PC-9 (cell line): ENCODE measurements at regions of chr15 and their contacts with region 1.

Region 1: DNA sequence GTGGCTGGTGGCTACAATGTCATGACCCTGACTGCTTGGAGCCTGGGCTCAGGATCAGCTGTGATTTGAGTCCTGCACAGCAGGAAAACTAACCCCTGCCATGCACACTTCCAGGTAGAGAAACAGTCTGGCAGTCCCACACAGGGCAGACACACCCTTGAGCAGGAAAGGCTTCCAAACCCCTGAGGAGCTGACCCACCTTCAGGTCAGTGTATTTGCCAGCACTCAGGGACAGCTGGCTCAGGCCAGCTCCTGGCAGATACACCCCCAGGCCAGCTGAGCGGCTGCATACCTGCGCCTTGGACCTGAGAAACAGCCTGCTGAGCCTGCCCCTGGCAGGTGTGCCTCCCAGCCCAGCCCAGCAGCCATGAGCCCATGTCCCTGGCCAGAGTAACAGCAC is 22.2 kb upstream of the CDAN1 start:
- DNase-seq: peak in 1 of 2 experiments; percentile 5
- H3K4me3 ChIP-seq: no peak overlapping the region
- H3K27ac ChIP-seq: no peak overlapping the region
- H3K4me1 ChIP-seq: no peaks in the 10 kb centered on the region
- H3K27me3 ChIP-seq: no peaks in the 10 kb centered on the region
- CTCF ChIP-seq: no peak

Region 2: DNA sequence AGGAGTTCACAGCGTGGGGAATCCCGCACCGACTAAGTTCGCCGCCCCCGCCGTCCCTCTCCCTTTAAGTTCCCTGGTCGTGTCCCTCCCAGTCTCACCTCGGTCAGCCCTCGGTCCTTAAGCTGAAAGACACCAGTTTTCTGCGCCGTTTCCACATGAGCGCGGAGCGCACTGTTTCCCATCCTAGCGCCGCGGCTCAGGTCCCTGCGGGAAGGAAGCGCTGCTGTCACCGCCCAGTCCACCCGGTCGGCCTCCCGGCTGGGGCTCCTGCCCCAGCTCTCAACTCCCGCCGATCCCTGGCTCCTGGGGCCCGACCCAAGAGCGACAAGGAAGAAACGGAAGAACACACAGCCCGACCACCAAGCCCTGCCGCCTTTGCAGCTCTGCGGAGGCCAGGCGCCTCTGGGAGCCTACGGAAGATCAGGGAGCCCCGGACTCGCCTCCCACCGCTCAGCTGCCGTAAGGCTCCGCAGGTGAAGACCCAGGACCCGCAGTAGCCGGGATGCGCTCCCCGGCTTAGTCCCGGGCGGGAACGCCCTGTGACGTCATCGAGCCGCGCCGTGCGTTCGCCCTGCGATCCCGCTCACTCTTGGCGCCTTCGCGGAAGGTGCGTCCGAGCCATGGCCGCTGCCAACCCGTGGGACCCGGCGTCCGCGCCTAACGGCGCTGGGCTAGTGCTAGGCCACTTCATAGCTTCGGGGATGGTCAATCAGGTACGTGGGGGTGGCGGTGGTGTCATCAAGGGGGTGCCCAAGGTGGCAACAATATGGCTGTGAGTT is 210.7 kb before region 1 on chr15 and contains the starts of genes HAUS2 and LRRC57:
- CTCF ChIA-PET with region 1: no interaction called
- POLR2A ChIA-PET with region 1: interaction called, 10 read pairs
- intact Hi-C with region 1: no loop called
- DNase-seq: peak; percentile 65 to 86
- H3K4me3 ChIP-seq: peak within 1 kb of the TSS; percentile 87
- H3K27ac ChIP-seq: peak within 1 kb of the TSS; percentile 40
- H3K4me1 ChIP-seq: peaks cover 15% of the 10 kb centered on the region
- H3K27me3 ChIP-seq: no peaks in the 10 kb centered on the region
- CTCF ChIP-seq: no peak
- total RNA-seq, gene HAUS2: 17.7 and 23.7 TPM in 2 replicates
- total RNA-seq, gene LRRC57: 22.7 and 23.0 TPM in 2 replicates